CD8-positive, alpha-beta T cell (primary cell): ENCODE measurements at regions of chr5 and their contacts with region 1.

Region 1: GRCh38 chr5:140351609-140352334 is 5.4 kb upstream of the HBEGF start:
- DNase-seq: peak in 8 of 9 experiments; percentile 19 to 83 (median 52)
- ATAC-seq: peak; percentile 84
- H3K4me3 ChIP-seq: no peak overlapping the region
- H3K4me3 Mint-ChIP-seq: no peak overlapping the region
- H3K27ac ChIP-seq: no peak overlapping the region
- H3K27ac Mint-ChIP-seq: no peak overlapping the region
- H3K4me1 ChIP-seq: no peaks in the 10 kb centered on the region
- H3K4me1 Mint-ChIP-seq: peaks cover 10% of the 10 kb centered on the region
- H3K27me3 ChIP-seq: peaks cover 0 to 11% of the 10 kb centered on the region in 2 experiments
- H3K27me3 Mint-ChIP-seq: peaks cover 27% of the 10 kb centered on the region
- CTCF ChIP-seq: peak; percentile 86

Region 2: DNA sequence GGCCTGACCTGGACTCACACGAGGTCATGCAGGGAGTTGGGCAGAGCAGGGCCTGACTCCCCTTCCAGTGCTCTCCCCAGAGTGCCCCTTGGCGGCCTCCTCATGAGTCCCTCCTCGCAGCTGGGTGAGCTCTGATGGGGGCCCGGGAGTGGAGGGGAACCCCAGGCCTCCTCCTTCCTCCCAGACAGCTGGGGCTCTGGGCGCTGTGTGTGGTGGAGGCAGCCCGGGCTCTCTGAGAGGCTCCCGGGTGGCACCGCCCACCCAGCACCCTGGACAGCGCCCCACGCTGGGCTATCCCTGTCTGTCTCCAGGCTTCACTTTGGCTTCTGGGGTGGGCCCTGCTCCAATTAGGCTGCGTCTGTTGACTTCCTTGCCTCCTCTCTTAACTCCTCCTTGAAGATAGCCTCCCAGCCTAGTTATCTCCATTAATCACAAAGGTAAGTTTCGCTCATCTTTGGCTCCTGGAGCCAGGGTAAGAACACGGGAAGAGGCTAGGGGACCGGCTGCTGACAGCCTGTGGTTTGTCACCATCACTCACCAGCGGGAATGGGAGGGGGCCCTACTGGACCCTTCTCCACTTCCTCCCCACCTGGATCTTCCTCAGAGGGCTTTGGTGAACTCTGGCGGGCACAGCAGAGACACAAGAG is 543.2 kb before region 1 on chr5:
- CTCF ChIA-PET with region 1: no interaction called
- POLR2A ChIA-PET with region 1: no interaction called
- intact Hi-C with region 1: no loop called
- DNase-seq: peak in 4 of 9 experiments; percentile 18 to 40 (median 39)
- ATAC-seq: peak; percentile 62
- H3K4me3 ChIP-seq: no peak overlapping the region
- H3K4me3 Mint-ChIP-seq: no peak overlapping the region
- H3K27ac ChIP-seq: no peak overlapping the region
- H3K27ac Mint-ChIP-seq: no peak overlapping the region
- H3K4me1 ChIP-seq: no peaks in the 10 kb centered on the region
- H3K4me1 Mint-ChIP-seq: no peaks in the 10 kb centered on the region
- H3K27me3 ChIP-seq: no peaks in the 10 kb centered on the region
- H3K27me3 Mint-ChIP-seq: peaks cover 11% of the 10 kb centered on the region
- CTCF ChIP-seq: no peak

Region 3: DNA sequence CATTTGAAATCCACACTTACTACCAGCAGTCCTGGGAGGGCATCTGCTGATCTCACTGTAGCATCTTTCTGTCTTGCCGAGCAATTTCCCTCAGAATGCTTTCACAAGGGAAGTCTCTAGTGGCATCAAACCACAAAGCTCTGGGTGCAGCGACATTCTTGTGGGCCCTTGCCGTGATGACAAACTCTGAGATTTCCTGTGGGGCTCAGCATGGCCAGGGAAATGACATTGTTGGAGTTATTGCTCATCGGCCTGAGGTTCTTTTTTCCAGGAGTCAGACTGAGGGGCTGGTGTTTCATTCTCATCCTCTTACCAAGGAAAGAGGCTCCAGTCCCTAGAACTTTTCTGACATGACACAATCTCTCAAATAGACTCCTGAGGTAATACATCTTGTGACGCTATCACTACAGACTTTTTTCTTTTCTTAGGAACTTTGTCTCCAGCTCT is 100.2 kb before region 1 on chr5:
- CTCF ChIA-PET with region 1: interaction called, 337 read pairs
- POLR2A ChIA-PET with region 1: no interaction called
- intact Hi-C with region 1: no loop called
- DNase-seq: peak in 7 of 9 experiments; percentile 15 to 66 (median 45)
- ATAC-seq: peak; percentile 77
- H3K4me3 ChIP-seq: no peak overlapping the region
- H3K4me3 Mint-ChIP-seq: no peak overlapping the region
- H3K27ac ChIP-seq: no peak overlapping the region
- H3K27ac Mint-ChIP-seq: peak overlapping the region; percentile 39
- H3K4me1 ChIP-seq: peaks cover 14% of the 10 kb centered on the region
- H3K4me1 Mint-ChIP-seq: peaks cover 30% of the 10 kb centered on the region
- H3K27me3 ChIP-seq: no peaks in the 10 kb centered on the region
- H3K27me3 Mint-ChIP-seq: no peaks in the 10 kb centered on the region
- CTCF ChIP-seq: no peak

Region 4: GRCh38 chr5:140302786-140303639 is 48.8 kb before region 1 on chr5 and contains the start of gene PFDN1:
- CTCF ChIA-PET with region 1: interaction called, 14 read pairs
- POLR2A ChIA-PET with region 1: interaction called, 4 read pairs
- intact Hi-C with region 1: loop called (anchors 1 to 5 kb)
- DNase-seq: peak; percentile 77 to 97 (median 90)
- ATAC-seq: peak; percentile 100
- H3K4me3 ChIP-seq: peak within 1 kb of the TSS; percentile 73 to 87
- H3K4me3 Mint-ChIP-seq: peak within 1 kb of the TSS; percentile 99
- H3K27ac ChIP-seq: peak within 1 kb of the TSS; percentile 61 to 82
- H3K27ac Mint-ChIP-seq: peak within 1 kb of the TSS; percentile 98
- H3K4me1 ChIP-seq: peaks cover 14% of the 10 kb centered on the region
- H3K4me1 Mint-ChIP-seq: peaks cover 29% of the 10 kb centered on the region
- H3K27me3 ChIP-seq: no peaks in the 10 kb centered on the region
- H3K27me3 Mint-ChIP-seq: peaks cover 4% of the 10 kb centered on the region
- CTCF ChIP-seq: no peak
- total RNA-seq, gene PFDN1: 28.4 to 30.5 TPM

Region 5: GRCh38 chr5:140362860-140363630 is 11.3 kb after region 1 on chr5:
- CTCF ChIA-PET with region 1: interaction called, 29 read pairs
- POLR2A ChIA-PET with region 1: no interaction called
- intact Hi-C with region 1: no loop called
- DNase-seq: peak; percentile 63 to 87 (median 83)
- ATAC-seq: peak; percentile 97
- H3K4me3 ChIP-seq: peak overlapping the region; percentile 28 to 35
- H3K4me3 Mint-ChIP-seq: peak overlapping the region; percentile 77
- H3K27ac ChIP-seq: no peak overlapping the region
- H3K27ac Mint-ChIP-seq: no peak overlapping the region
- H3K4me1 ChIP-seq: peaks cover 5% of the 10 kb centered on the region
- H3K4me1 Mint-ChIP-seq: peaks cover 6% of the 10 kb centered on the region
- H3K27me3 ChIP-seq: no peaks in the 10 kb centered on the region
- H3K27me3 Mint-ChIP-seq: peaks cover 8% of the 10 kb centered on the region
- CTCF ChIP-seq: peak; percentile 94